ENCODE measurements at regions of chr7 and their contacts with region 1.

Region 1: GRCh38 chr7:108002726-108003598 is at the start of gene LAMB1:
- DNase-seq: peak; percentile 80
- H3K4me3 ChIP-seq: peak within 1 kb of the TSS; percentile 50 to 77 (median 67)
- H3K27ac ChIP-seq: peak within 1 kb of the TSS; percentile 85 to 91 (median 88)
- H3K4me1 ChIP-seq: peaks cover 12 to 55% (median 39%) of the 10 kb centered on the region in 4 donors
- H3K27me3 ChIP-seq: peaks cover 14% of the 10 kb centered on the region
- CTCF ChIP-seq: no peak
- EP300 ChIP-seq: no peak
- POLR2A ChIP-seq: peak; percentile 61
- total RNA-seq, gene LAMB1: 54.2 to 119 (median 90.3) TPM

Region 2: GRCh38 chr7:107816011-107816566 is 186.9 kb before region 1 on chr7:
- in situ Hi-C with region 1: no loop called
- intact Hi-C with region 1: no loop called
- DNase-seq: no peak
- H3K4me3 ChIP-seq: no peak overlapping the region
- H3K27ac ChIP-seq: peak overlapping the region; percentile 62 to 74 (median 68)
- H3K4me1 ChIP-seq: peaks cover 0 to 33% (median 15%) of the 10 kb centered on the region in 4 donors
- H3K27me3 ChIP-seq: no peaks in the 10 kb centered on the region
- CTCF ChIP-seq: no peak
- EP300 ChIP-seq: no peak
- POLR2A ChIP-seq: no peak

Region 3: GRCh38 chr7:107939573-107940489 is 63.1 kb before region 1 on chr7:
- in situ Hi-C with region 1: no loop called
- intact Hi-C with region 1: loop called (anchors 10 kb)
- DNase-seq: no peak
- H3K4me3 ChIP-seq: no peak overlapping the region
- H3K27ac ChIP-seq: peak overlapping the region; percentile 66 to 82 (median 72)
- H3K4me1 ChIP-seq: peaks cover 5 to 38% (median 17%) of the 10 kb centered on the region in 4 donors
- H3K27me3 ChIP-seq: no peaks in the 10 kb centered on the region
- CTCF ChIP-seq: no peak
- EP300 ChIP-seq: no peak
- POLR2A ChIP-seq: no peak

Region 4: GRCh38 chr7:108094933-108095710 is 92.2 kb after region 1 on chr7:
- in situ Hi-C with region 1: no loop called
- intact Hi-C with region 1: loop called (anchors 5 kb)
- DNase-seq: peak; percentile 65
- H3K4me3 ChIP-seq: no peak overlapping the region
- H3K27ac ChIP-seq: peak overlapping the region; percentile 62 to 78 (median 75)
- H3K4me1 ChIP-seq: peaks cover 5 to 23% (median 17%) of the 10 kb centered on the region in 4 donors
- H3K27me3 ChIP-seq: no peaks in the 10 kb centered on the region
- CTCF ChIP-seq: no peak
- EP300 ChIP-seq: no peak
- POLR2A ChIP-seq: no peak

Region 5: DNA sequence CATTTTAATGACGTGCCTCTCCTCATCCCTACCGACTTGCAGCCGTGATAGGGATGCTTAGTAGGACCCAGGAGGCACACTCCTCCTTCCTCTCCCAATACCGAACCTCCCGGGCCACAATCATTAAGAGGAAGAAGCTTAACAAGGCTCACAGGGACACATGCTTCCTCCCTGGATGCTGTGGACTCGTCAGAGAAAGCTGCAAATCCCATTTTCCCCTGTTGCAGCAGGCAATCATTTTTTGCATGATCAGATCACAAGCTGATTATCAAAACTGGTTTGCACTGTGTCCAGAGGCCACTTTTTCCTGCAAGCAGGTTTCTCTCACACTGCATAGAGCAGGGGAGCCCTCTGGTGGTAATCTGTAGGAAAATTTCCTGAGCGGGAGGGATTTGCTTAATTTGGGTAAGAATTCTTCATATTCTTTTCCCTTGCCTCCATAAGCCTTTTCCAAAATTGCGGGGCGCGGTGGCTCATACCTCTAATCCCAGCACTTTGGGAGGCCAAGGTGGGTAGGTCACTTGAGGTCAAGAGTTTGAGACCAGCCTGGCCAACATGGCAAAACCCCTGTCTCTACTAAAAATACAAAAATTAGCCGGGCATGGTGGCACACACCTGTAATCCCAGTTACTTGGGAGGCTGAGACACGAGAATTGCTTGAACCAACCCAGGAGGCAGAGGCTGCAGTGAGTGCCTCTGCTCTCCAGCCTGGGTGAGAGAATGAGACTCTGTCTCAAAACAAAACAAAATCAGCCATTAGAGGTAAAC is 143.3 kb after region 1 on chr7:
- in situ Hi-C with region 1: no loop called
- intact Hi-C with region 1: loop called (anchors 10 kb)
- DNase-seq: peak; percentile 63
- H3K4me3 ChIP-seq: no peak overlapping the region
- H3K27ac ChIP-seq: no peak overlapping the region
- H3K4me1 ChIP-seq: peaks cover 0 to 6% (median 2%) of the 10 kb centered on the region in 4 donors
- H3K27me3 ChIP-seq: no peaks in the 10 kb centered on the region
- CTCF ChIP-seq: peak; percentile 85 to 89 (median 87)
- EP300 ChIP-seq: no peak
- POLR2A ChIP-seq: no peak